MCF 10A (cell line): ENCODE measurements at regions of chrX and their contacts with region 1.

Region 1: DNA sequence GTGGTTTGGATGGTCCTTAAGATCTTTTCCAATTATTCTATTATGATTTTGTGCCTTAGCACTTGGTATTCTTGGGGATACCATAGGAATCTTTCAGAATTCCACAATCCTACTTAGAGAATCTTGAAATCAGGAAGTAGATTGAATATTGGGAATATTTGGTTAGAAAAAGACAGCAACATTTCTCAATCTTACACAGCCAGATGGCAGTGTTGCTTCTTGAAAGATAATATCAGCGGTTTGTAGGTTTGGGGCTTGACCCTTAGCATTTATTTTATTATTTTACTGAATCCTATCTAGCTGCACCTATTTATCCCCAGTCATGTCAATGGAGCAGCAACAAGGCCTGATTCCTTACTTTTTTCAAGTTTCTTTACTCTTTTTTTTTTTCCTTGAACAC is 28.6 kb downstream of the MAGEB1 start:
- DNase-seq: peak; percentile 49
- H3K4me3 Mint-ChIP-seq: no peak overlapping the region
- H3K27ac Mint-ChIP-seq: no peak overlapping the region
- H3K4me1 Mint-ChIP-seq: peaks cover 5% of the 10 kb centered on the region
- H3K27me3 Mint-ChIP-seq: no peaks in the 10 kb centered on the region
- CTCF ChIP-seq: peak; percentile 39

Region 2: DNA sequence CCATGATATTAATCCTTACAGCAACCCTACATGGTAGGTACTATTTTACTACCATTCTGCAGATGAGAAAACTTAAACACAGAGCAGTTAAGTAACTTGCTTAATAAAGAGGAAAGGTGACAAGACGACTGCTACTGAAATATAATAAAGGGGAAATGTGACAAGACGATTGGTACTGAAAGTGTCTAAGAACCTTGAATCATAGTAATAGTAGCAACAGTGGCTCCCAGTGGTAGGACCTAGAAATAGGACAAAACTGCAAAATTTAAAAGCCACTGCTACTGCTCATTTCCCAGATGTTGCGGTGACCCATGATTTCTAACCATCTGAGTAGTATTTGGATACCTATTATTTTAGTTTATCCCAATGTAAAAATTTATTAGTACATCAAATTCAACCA is 212.6 kb after region 1 on chrX:
- CTCF ChIA-PET with region 1: interaction called, 7 read pairs
- POLR2A ChIA-PET with region 1: no interaction called
- intact Hi-C with region 1: loop called (anchors 1 kb)
- DNase-seq: peak; percentile 21
- H3K4me3 Mint-ChIP-seq: no peak overlapping the region
- H3K27ac Mint-ChIP-seq: no peak overlapping the region
- H3K4me1 Mint-ChIP-seq: no peaks in the 10 kb centered on the region
- H3K27me3 Mint-ChIP-seq: peaks cover 5% of the 10 kb centered on the region
- CTCF ChIP-seq: no peak

Region 3: GRCh38 chrX:30504309-30504708 is 228.8 kb after region 1 on chrX:
- CTCF ChIA-PET with region 1: interaction called, 61 read pairs
- POLR2A ChIA-PET with region 1: interaction called, 3 read pairs
- intact Hi-C with region 1: loop called (anchors 1 kb)
- DNase-seq: peak; percentile 52
- H3K4me3 Mint-ChIP-seq: no peak overlapping the region
- H3K27ac Mint-ChIP-seq: no peak overlapping the region
- H3K4me1 Mint-ChIP-seq: no peaks in the 10 kb centered on the region
- H3K27me3 Mint-ChIP-seq: peaks cover 47% of the 10 kb centered on the region
- CTCF ChIP-seq: peak; percentile 43

Region 4: DNA sequence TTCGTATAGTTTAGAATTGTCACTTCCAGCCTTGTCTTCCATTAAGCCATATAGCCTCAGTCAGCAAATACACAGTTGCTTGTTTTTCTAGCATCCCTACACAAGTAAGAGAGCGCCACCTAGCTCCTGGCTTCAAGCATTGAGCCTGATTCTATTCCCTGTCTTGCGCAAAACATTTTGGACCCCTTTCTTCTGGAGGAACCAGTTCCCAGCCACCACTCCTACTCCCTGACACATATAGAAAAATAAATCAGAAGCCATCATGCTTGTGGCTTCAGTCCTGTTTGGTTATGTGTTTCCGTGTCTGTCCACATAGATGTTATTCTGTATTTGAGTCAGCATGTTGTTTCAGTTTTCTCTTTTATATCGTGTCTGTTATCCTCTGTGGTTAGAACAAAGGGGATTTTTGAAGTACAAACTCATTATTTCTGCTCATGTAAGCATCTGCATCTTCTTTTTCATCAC is 437.6 kb after region 1 on chrX:
- CTCF ChIA-PET with region 1: no interaction called
- POLR2A ChIA-PET with region 1: no interaction called
- intact Hi-C with region 1: loop called (anchors 10 kb)
- DNase-seq: peak; percentile 65
- H3K4me3 Mint-ChIP-seq: no peak overlapping the region
- H3K27ac Mint-ChIP-seq: no peak overlapping the region
- H3K4me1 Mint-ChIP-seq: no peaks in the 10 kb centered on the region
- H3K27me3 Mint-ChIP-seq: peaks cover 28% of the 10 kb centered on the region
- CTCF ChIP-seq: peak; percentile 66